OCI-LY7 (cell line): ENCODE measurements at regions of chrX and their contacts with region 1.

Region 1: DNA sequence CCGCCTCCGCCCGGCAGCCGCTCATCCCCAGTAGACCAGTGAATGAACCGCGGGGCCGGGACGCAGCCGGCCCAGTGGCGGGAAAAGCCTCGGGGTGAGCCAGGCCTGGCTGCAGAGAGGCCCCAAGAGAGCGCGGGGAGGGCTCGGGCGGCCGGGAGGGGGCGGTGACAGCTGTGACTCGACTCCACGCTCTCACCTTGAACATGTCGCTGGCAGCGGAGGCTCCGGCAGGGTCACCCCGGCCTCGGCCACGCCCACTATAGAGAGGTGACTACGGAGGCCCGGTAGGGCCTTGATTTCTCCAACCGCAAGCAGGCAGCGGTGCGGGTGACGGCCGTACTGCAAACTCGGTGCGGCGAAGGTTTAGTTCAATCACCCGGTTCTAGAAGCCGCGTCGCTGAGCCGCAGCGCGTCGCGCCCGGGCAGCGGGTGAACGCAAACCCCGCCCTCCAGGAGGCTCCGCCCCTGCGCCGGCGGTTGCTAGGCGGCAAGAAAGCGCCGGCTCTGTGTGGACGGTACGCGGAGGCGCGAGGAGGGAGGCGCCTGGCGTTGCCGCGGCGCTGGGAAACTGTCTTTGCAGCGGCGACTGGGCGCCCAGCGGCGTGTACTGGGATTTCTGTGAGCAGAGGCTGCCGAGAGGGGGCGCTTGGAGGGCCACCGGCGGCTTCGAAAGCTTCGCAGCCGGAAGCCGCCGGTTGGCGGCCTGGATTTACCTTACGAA is at the starts of genes APOO and CXorf58:
- DNase-seq: peak; percentile 93
- H3K4me3 ChIP-seq: peak within 1 kb of the TSS; percentile 89
- H3K27ac ChIP-seq: peak within 1 kb of the TSS; percentile 93
- H3K4me1 ChIP-seq: peaks cover 21% of the 10 kb centered on the region
- CTCF ChIP-seq: peak; percentile 69
- total RNA-seq, gene APOO: 11.2 and 18.1 TPM in 2 replicates
- total RNA-seq, gene CXorf58: not detected in 2 replicates

Region 2: GRCh38 chrX:23782863-23783568 is 124.6 kb before region 1 on chrX and contains the start of gene SAT1:
- CTCF ChIA-PET with region 1: no interaction called
- POLR2A ChIA-PET with region 1: interaction called, 16 read pairs
- intact Hi-C with region 1: loop called (anchors 1 kb)
- DNase-seq: peak; percentile 95
- H3K4me3 ChIP-seq: peak within 1 kb of the TSS; percentile 89
- H3K27ac ChIP-seq: peak within 1 kb of the TSS; percentile 59
- H3K4me1 ChIP-seq: peaks cover 26% of the 10 kb centered on the region
- CTCF ChIP-seq: peak; percentile 81
- total RNA-seq, gene SAT1: 46.9 and 75.9 TPM in 2 replicates

Region 3: GRCh38 chrX:23952984-23953907 is 45.6 kb after region 1 on chrX:
- CTCF ChIA-PET with region 1: no interaction called
- POLR2A ChIA-PET with region 1: interaction called, 7 read pairs
- intact Hi-C with region 1: loop called (anchors 2 kb)
- DNase-seq: peak; percentile 61
- H3K4me3 ChIP-seq: peak overlapping the region; percentile 53
- H3K27ac ChIP-seq: peak overlapping the region; percentile 63
- H3K4me1 ChIP-seq: peaks cover 18% of the 10 kb centered on the region
- CTCF ChIP-seq: no peak

Region 4: DNA sequence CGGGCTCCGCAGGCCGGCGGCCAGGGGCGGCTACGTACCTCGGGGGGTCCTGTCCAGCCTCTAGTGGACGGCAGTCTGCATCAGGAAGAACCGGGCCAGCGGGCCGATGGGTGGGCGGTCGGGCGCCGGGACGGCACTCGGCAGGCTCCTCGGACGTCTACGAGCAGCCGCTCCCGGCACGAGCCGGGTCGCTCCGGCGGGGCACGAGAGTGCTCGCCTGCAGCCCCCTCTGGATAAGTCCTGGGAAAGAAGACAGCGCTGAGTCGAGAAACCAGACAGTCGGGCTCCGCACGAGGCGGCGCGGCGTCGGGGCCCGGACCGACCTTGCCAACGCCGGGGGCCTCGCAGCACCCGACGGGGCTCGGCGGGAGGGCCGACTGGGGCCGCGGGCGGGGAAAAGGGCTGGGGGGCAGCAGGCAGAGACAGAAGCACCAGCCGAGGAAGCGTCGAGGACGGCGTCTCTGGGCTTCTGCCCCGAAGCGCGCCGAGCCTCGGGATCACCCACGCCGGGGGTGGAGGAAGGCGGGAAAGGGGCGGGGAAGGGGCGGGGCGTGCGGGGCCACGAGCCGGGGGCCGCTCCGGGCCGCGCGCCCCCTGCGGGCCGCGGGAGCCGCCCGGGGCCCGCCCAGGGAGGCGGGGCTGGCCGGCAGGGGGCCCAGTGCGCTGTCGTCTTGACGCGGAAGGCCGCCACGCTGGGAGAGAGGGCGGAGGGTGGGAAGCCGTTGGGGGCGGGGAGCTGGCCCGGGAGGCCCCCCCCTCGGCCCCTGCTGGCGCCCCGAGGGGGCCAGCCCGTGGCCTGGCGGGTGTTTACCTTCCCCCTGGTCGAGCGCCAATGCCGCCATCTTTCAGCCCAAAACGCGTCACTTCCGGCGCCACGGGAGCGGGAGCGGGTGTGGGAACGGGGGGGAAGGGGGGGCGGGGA is 117.4 kb after region 1 on chrX:
- CTCF ChIA-PET with region 1: no interaction called
- POLR2A ChIA-PET with region 1: interaction called, 3 read pairs
- intact Hi-C with region 1: loop called (anchors 1 kb)
- DNase-seq: peak; percentile 88
- H3K4me3 ChIP-seq: peak overlapping the region; percentile 94
- H3K27ac ChIP-seq: peak overlapping the region; percentile 78
- H3K4me1 ChIP-seq: peaks cover 27% of the 10 kb centered on the region
- CTCF ChIP-seq: 0 out of 2 replicates have a peak, but pooled peaks have one; percentile 2

Region 5: DNA sequence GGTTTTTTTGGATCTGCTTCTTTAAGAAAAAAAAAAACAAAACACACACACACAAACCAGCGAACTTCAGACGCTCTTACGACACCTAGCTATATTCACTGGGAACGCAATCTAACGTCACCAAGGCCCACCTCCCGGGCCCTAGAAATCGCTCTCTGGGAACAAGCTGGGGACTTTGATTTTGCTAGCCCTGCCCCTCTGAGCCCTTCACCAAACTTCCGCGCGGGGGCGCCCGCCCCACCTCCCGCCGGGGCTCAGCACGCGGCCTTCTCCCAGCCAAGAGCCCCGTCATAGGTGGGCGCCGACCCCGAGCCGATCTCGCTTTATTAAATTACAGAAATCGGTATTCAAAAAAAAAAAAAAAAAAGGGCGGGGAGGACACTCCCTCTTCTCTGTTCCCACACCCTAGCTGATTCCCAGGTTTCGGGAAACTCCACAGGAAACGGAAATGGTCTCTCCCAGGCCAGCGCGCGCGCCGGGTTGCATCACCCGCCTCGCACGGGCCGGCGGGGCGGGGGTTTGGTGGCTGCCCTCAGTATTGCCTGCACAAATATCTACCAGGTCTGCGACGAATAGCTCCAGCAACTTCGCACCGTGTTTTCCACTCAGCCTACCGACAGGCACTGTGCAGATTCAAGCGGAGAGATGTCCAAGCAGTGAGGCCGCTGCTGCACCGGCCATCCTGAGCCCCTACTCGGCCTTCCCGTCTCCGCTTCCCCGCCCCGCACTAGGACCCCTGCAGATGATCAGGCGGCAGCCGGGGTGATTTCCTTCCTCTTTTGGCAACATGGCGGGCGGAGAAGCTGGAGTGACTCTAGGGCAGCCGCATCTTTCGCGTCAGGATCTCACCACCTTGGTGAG is 146.8 kb after region 1 on chrX and contains the start of gene EIF2S3:
- CTCF ChIA-PET with region 1: no interaction called
- POLR2A ChIA-PET with region 1: interaction called, 4 read pairs
- intact Hi-C with region 1: loop called (anchors 1 kb)
- DNase-seq: peak; percentile 94
- H3K4me3 ChIP-seq: no peak within 1 kb of the TSS
- H3K27ac ChIP-seq: no peak within 1 kb of the TSS
- H3K4me1 ChIP-seq: peaks cover 11% of the 10 kb centered on the region
- CTCF ChIP-seq: peak; percentile 79
- total RNA-seq, gene EIF2S3: 231 and 243 TPM in 2 replicates

Region 6: DNA sequence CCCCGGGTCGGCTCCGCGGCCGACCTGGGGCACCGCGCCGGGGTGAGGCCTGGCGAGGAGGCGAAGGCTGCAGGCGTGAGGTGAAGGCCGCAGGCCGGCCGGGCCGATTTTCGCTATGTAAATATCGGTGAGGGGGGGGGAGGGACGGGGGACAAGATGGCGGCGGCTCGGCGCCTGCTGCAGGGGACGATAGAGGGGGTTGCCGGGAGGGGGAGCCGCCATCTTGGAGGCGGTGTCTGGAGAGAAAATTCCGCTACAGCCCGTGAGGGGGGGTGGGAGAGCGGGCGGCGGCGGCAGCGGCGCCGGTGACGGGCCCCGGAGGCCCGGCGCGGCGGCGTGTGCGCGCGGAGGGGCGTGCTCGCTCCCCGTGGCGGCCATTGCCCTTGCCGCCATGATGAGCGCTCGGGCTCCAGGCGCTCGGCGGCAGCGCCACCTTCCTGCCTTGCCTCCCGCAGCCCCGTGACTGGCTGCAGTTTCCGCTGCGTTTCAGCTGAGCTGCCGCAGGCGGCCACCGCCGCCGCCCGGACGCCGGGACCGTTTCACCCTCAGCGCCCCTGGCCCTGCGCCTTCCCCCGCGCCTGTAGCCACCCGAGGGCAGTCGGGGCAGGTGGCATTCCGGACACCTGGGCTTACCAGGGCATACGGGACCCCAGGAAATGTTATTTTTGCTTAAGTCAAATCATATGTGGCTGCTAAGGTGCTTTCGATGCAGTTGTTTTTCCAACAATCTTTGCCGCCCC is 242.6 kb after region 1 on chrX:
- CTCF ChIA-PET with region 1: no interaction called
- POLR2A ChIA-PET with region 1: interaction called, 4 read pairs
- intact Hi-C with region 1: loop called (anchors 5 kb)
- DNase-seq: peak; percentile 87
- H3K4me3 ChIP-seq: peak overlapping the region; percentile 75
- H3K27ac ChIP-seq: peak overlapping the region; percentile 88
- H3K4me1 ChIP-seq: peaks cover 61% of the 10 kb centered on the region
- CTCF ChIP-seq: peak; percentile 47; the same call in 1 of the 2 replicates

Region 7: GRCh38 chrX:24241822-24242648 is 334.4 kb after region 1 on chrX:
- CTCF ChIA-PET with region 1: no interaction called
- POLR2A ChIA-PET with region 1: no interaction called
- intact Hi-C with region 1: loop called (anchors 5 kb)
- DNase-seq: peak; percentile 62
- H3K4me3 ChIP-seq: no peak overlapping the region
- H3K27ac ChIP-seq: peak overlapping the region; percentile 73
- H3K4me1 ChIP-seq: peaks cover 26% of the 10 kb centered on the region
- CTCF ChIP-seq: peak; percentile 74